ENCODE measurements at regions of chr2 and their contacts with region 1.

Region 1: DNA sequence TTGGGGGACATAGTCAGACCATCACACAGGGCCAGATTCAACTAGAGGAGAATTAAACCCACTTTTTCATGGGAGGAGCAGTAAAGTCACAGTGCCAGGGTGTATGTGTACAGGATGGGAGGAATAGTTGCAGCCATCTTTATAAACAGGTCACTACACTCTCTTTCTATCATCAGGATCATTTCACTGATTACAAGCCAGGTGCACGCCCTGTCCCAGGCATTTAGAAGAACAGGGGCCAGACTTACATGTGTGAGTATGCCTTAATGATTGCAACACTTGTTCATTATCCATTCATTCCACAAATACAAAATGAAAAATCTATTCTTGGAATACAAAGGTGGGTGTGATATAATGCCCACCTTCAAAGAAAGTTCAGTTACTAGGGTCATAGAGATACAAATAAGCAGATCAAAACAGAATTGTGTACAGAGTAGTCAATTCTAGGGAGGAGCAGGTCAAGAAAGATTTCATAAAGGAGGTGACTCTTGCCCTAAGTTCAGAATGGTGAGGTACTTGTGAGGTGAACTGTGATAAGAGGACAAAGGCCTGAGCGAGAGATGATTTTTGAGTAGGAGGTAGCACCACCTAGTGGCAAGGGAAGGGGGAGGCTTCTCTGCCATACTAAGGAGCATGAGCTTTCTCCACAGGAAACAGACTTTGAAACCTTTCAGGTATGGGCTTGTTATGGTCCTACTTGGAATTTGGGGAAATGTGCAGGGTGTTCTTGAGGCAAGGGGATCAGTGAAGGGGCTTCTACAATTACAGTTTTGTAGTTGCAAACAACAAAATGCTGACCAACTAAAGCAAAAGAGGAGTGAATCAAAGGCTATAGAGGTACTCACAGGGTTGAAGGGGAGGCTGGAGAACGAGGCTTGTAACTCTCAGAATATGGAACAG is 156.3 kb downstream of the SUCLG1 start:
- DNase-seq: peak; percentile 55
- ATAC-seq: peak; percentile 90
- H3K4me3 Mint-ChIP-seq: no peak overlapping the region
- H3K27ac Mint-ChIP-seq: no peak overlapping the region
- H3K4me1 Mint-ChIP-seq: peaks cover 28% of the 10 kb centered on the region
- H3K27me3 Mint-ChIP-seq: peaks cover 5% of the 10 kb centered on the region
- CTCF ChIP-seq: peak; percentile 65

Region 2: DNA sequence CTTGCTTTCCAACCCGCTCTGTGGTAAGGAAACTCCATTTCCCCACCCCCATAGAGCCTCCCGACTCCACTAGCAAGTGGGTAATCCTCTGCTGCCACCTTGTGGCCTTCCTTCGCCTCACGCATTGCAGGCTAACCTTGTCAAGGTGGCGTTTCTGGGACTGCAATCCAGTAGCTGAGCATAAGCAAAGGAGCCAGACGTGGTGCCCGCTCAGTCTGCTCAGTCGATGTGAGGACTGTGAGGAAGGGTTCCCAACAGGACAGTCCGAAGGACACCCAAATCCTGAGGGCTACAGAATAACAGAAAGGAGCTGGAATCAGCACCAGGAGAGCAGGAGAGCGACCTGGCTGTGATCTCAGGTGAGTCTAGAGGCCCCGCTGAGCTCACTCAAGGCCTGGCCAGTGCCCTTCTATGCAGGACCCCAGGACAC is 12.2 kb after region 1 on chr2:
- CTCF ChIA-PET with region 1: interaction called, 11 read pairs
- POLR2A ChIA-PET with region 1: no interaction called
- DNase-seq: peak; percentile 95
- ATAC-seq: peak; percentile 92
- H3K4me3 Mint-ChIP-seq: no peak overlapping the region
- H3K27ac Mint-ChIP-seq: no peak overlapping the region
- H3K4me1 Mint-ChIP-seq: peaks cover 35% of the 10 kb centered on the region
- H3K27me3 Mint-ChIP-seq: no peaks in the 10 kb centered on the region
- CTCF ChIP-seq: peak; percentile 81